HAP-1 (cell line): ENCODE measurements at regions of chr7 and their contacts with region 1.

Region 1: GRCh38 chr7:107879400-107880035 is 11.5 kb upstream of the DLD start:
- DNase-seq: peak; percentile 54 to 66
- H3K4me3 ChIP-seq: no peak overlapping the region
- H3K4me1 ChIP-seq: no peaks in the 10 kb centered on the region
- H3K27me3 ChIP-seq: peaks cover 8% of the 10 kb centered on the region

Region 2: GRCh38 chr7:107180378-107180777 is 699.1 kb before region 1 on chr7:
- in situ Hi-C with region 1: loop called (anchors 25 kb)
- DNase-seq: no peak
- H3K4me3 ChIP-seq: no peak overlapping the region
- H3K4me1 ChIP-seq: peaks cover 3% of the 10 kb centered on the region; the same call in 1 of the 2 replicates
- H3K27me3 ChIP-seq: no peaks in the 10 kb centered on the region

Region 3: DNA sequence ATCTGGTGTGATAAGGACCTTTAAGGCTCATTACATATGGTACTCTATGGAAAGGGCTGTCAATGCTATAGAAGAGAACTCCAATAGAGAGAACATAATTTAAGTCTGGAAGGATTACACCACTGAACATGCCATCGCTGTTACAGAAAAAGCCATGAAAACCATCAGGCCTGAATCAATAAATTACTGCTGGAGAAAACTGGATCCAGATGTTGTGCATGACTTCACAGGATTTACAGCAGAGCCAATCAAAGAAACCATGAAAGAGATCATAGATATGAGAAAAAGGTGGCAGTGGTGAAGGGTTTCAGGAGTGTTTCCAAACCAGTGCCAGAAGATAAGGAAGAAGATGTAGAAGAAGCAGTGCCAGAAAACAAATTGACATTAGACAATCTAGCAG is 428.5 kb before region 1 on chr7:
- in situ Hi-C with region 1: loop called (anchors 10 kb)
- DNase-seq: no peak
- H3K4me3 ChIP-seq: no peak overlapping the region
- H3K4me1 ChIP-seq: no peaks in the 10 kb centered on the region
- H3K27me3 ChIP-seq: no peaks in the 10 kb centered on the region

Region 4: GRCh38 chr7:108094346-108094745 is 214.8 kb after region 1 on chr7:
- in situ Hi-C with region 1: no loop called
- DNase-seq: no peak
- H3K4me3 ChIP-seq: no peak overlapping the region
- H3K4me1 ChIP-seq: peaks cover 17% of the 10 kb centered on the region
- H3K27me3 ChIP-seq: 0 out of 2 replicates have a peak, but pooled peaks cover 3% of the 10 kb centered on the region

Region 5: DNA sequence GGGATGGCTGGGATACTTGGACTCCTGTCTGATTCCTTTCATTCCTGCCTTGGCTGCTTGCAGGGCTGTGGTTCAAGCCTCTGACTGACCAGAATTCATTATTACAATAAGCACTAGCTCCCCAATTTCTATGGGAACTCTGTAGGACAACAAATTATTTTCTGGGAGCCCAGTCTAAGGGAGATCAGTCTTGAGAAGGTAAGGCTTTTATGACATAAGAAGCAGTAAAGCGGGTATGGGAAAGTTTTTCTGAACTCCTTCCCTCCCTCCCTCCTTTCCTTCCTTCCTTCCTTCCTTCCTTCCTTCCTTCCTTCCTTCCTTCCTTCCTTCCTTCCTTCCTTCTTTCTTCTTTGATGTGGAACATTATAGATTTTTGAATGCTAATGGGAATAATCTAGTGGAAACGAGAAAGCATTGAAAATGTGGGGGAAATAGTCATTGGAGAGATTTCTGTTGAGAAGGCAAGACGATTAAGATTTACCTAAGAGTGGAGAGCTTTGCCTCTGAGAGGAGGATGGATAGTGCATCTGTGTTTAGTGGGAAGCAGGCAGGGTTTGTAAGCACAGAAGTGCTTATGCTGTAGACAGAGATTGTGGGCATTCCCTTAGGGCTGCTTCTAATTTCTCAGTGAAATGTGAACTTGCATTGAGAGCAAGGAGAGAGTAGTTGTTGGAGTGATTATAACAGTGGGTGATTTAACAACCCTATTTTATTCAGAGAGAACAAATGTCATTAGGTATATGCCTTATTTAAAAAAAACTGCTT is 891.6 kb after region 1 on chr7:
- in situ Hi-C with region 1: no loop called
- DNase-seq: no peak
- H3K4me3 ChIP-seq: no peak overlapping the region
- H3K4me1 ChIP-seq: no peaks in the 10 kb centered on the region
- H3K27me3 ChIP-seq: no peaks in the 10 kb centered on the region